Naive thymus-derived CD4-positive, alpha-beta T cell (primary cell): ENCODE measurements at regions of chr9 and their contacts with region 1.

Region 1: GRCh38 chr9:68905129-68905528 is 108.8 kb downstream of the PRKACG start:
- DNase-seq: no peak
- ATAC-seq: no peak
- H3K4me3 ChIP-seq: no peak overlapping the region
- H3K4me3 Mint-ChIP-seq: no peak overlapping the region
- H3K27ac ChIP-seq: no peak overlapping the region
- H3K27ac Mint-ChIP-seq: peak overlapping the region in 2 of 9 donors; percentile 49 to 51
- H3K4me1 ChIP-seq: no peaks in the 10 kb centered on the region
- H3K4me1 Mint-ChIP-seq: peaks cover 5 to 25% (median 11%) of the 10 kb centered on the region in 7 donors
- H3K27me3 ChIP-seq: no peaks in the 10 kb centered on the region
- H3K27me3 Mint-ChIP-seq: no peaks in the 10 kb centered on the region

Region 2: DNA sequence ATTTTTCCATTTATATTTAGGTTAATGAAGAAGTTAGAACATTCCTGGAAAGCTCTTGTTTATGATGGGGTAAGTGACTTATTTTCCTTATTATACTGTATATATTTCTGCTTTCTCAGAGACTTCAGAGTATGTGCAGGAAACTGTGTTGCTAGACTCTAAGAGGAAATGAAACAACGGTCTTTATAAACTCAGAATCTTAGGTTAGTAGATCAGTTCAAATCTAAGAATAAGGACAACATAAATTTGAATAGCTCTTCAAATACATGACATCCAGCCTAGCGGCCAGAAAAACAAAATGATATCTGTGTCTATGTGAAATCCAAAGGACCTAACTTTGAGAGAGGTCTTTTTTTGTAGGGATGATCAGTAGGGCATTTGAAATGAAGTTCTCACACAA is 14.5 kb after region 1 on chr9:
- CTCF ChIA-PET with region 1: no interaction called
- POLR2A ChIA-PET with region 1: no interaction called
- intact Hi-C with region 1: loop called in 1 of 2 experiments (anchors 2 kb)
- DNase-seq: no peak
- ATAC-seq: no peak
- H3K4me3 ChIP-seq: no peak overlapping the region
- H3K4me3 Mint-ChIP-seq: peak overlapping the region in 7 of 10 donors; percentile 0 to 50 (median 7)
- H3K27ac ChIP-seq: no peak overlapping the region
- H3K27ac Mint-ChIP-seq: peak overlapping the region in 4 of 9 donors; percentile 1 to 23 (median 13)
- H3K4me1 ChIP-seq: peaks cover 0 to 7% of the 10 kb centered on the region in 2 donors
- H3K4me1 Mint-ChIP-seq: peaks cover 3 to 24% (median 15%) of the 10 kb centered on the region in 7 donors
- H3K27me3 ChIP-seq: no peaks in the 10 kb centered on the region
- H3K27me3 Mint-ChIP-seq: no peaks in the 10 kb centered on the region